Activated T-helper 2 cell treated with anti-CD3 and anti-CD28 coated beads, Interferon-gamma antibody, Interleukin-2, Interleukin-4, amounts not matched to agents 10 μg/mL and 5 μg/mL and 100 μg/mL, durations not matched to agents 14 hours and 24 hours and 36 hours (primary cell): ENCODE measurements at regions of chr11 and their contacts with region 1.

Region 1: GRCh38 chr11:110453684-110454354 is 24.1 kb downstream of the FDX1 start:
- DNase-seq: no peak
- H3K4me3 Mint-ChIP-seq: peak overlapping the region; percentile 28
- H3K27ac Mint-ChIP-seq: peak overlapping the region; percentile 34
- H3K4me1 Mint-ChIP-seq: peaks cover 55% of the 10 kb centered on the region
- H3K27me3 Mint-ChIP-seq: no peaks in the 10 kb centered on the region

Region 2: GRCh38 chr11:110092515-110093404 is 361.1 kb before region 1 on chr11 and contains the start of gene ZC3H12C:
- intact Hi-C with region 1: loop called (anchors 5 kb)
- DNase-seq: peak; percentile 38
- H3K4me3 Mint-ChIP-seq: peak within 1 kb of the TSS; percentile 89
- H3K27ac Mint-ChIP-seq: peak within 1 kb of the TSS; percentile 95
- H3K4me1 Mint-ChIP-seq: peaks cover 36% of the 10 kb centered on the region
- H3K27me3 Mint-ChIP-seq: peaks cover 32% of the 10 kb centered on the region
- total RNA-seq, gene ZC3H12C: 16.7 and 17.5 TPM in 2 replicates

Region 3: DNA sequence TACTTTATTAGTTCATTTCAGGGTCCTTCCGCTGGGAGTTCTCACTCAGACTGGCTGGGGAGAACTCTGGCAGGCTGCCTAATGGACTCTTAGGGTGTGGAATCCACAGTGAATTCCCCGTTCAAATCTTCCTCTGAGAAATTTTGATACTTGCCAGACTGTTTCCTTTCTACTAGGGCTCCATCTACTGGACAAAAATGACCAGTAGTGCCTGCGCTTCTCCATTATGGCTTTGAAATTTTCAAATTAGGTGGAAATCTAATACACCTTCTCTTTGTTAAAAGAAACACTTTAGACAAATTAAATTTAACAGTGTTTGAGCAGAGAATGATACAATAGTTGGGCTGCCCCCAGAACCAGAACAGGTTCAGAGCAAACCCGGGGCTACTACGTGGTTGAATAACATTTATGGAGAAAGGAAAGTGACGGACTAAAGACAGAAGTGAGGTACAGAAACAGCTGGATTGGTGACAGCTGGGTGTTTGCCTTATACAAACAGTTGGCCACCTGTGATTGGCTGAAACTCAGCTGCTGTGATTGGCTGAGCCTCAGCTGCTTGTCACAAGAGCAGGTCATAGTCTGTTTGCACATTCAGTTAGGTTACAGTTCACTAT is 77.0 kb before region 1 on chr11:
- intact Hi-C with region 1: loop called (anchors 2 kb)
- DNase-seq: no peak
- H3K4me3 Mint-ChIP-seq: no peak overlapping the region
- H3K27ac Mint-ChIP-seq: peak overlapping the region; percentile 21
- H3K4me1 Mint-ChIP-seq: peaks cover 28% of the 10 kb centered on the region
- H3K27me3 Mint-ChIP-seq: peaks cover 2% of the 10 kb centered on the region

Region 4: GRCh38 chr11:110490886-110491285 is 37.1 kb after region 1 on chr11:
- intact Hi-C with region 1: no loop called
- DNase-seq: no peak
- H3K4me3 Mint-ChIP-seq: no peak overlapping the region
- H3K27ac Mint-ChIP-seq: no peak overlapping the region
- H3K4me1 Mint-ChIP-seq: peaks cover 3% of the 10 kb centered on the region
- H3K27me3 Mint-ChIP-seq: peaks cover 8% of the 10 kb centered on the region

Region 5: GRCh38 chr11:110525883-110526282 is 72.1 kb after region 1 on chr11:
- intact Hi-C with region 1: loop called (anchors 5 kb)
- DNase-seq: no peak
- H3K4me3 Mint-ChIP-seq: no peak overlapping the region
- H3K27ac Mint-ChIP-seq: no peak overlapping the region
- H3K4me1 Mint-ChIP-seq: peaks cover 13% of the 10 kb centered on the region
- H3K27me3 Mint-ChIP-seq: no peaks in the 10 kb centered on the region

Region 6: GRCh38 chr11:110818032-110818687 is 364.3 kb after region 1 on chr11:
- intact Hi-C with region 1: loop called (anchors 2 kb)
- DNase-seq: no peak
- H3K4me3 Mint-ChIP-seq: no peak overlapping the region
- H3K27ac Mint-ChIP-seq: no peak overlapping the region
- H3K4me1 Mint-ChIP-seq: peaks cover 13% of the 10 kb centered on the region
- H3K27me3 Mint-ChIP-seq: peaks cover 8% of the 10 kb centered on the region

Region 7: GRCh38 chr11:111229604-111230003 is 775.8 kb after region 1 on chr11:
- intact Hi-C with region 1: loop called (anchors 5 kb)
- DNase-seq: no peak
- H3K4me3 Mint-ChIP-seq: no peak overlapping the region
- H3K27ac Mint-ChIP-seq: no peak overlapping the region
- H3K4me1 Mint-ChIP-seq: peaks cover 24% of the 10 kb centered on the region
- H3K27me3 Mint-ChIP-seq: peaks cover 40% of the 10 kb centered on the region

Region 8: DNA sequence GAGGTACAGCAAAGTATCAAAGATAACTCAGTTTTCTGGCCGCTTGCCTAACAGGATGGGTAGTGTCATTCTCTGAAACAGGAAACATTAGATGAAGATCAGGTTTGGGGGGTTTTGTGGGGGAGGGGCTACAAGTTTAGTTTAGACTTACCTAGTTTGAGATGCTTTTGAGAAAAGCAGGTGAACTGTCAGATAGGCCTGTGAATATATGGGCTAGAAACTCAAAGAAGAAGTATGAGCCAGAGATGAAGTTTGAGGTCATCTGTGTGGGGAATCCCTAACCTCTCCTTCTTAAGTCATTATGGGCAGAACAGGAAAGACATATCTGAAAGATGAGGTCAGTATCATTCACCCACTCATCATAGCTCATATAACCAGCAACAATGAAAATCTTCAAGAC is 1072.7 kb after region 1 on chr11:
- intact Hi-C with region 1: loop called (anchors 5 kb)
- DNase-seq: no peak
- H3K4me3 Mint-ChIP-seq: no peak overlapping the region
- H3K27ac Mint-ChIP-seq: peak overlapping the region; percentile 49
- H3K4me1 Mint-ChIP-seq: peaks cover 42% of the 10 kb centered on the region
- H3K27me3 Mint-ChIP-seq: no peaks in the 10 kb centered on the region